ENCODE measurements at regions of chr6 and their contacts with region 1.

Region 1: GRCh38 chr6:24666641-24667377 is at the starts of genes ACOT13 and TDP2:
- DNase-seq: peak; percentile 94 to 98 (median 97)
- H3K4me3 ChIP-seq: peak within 1 kb of the TSS; percentile 78
- H3K4me3 Mint-ChIP-seq: peak within 1 kb of the TSS; percentile 97 to 100 (median 99)
- H3K27ac ChIP-seq: peak within 1 kb of the TSS; percentile 89
- H3K27ac Mint-ChIP-seq: peak within 1 kb of the TSS; percentile 90 to 99 (median 98)
- H3K4me1 ChIP-seq: peaks cover 39% of the 10 kb centered on the region
- H3K4me1 Mint-ChIP-seq: peaks cover 43 to 76% (median 64%) of the 10 kb centered on the region in 3 donors
- H3K27me3 ChIP-seq: no peaks in the 10 kb centered on the region
- H3K27me3 Mint-ChIP-seq: no peaks in the 10 kb centered on the region
- total RNA-seq, gene ACOT13: 19.6 to 25.3 TPM
- total RNA-seq, gene TDP2: 49.8 to 50.6 TPM

Region 2: DNA sequence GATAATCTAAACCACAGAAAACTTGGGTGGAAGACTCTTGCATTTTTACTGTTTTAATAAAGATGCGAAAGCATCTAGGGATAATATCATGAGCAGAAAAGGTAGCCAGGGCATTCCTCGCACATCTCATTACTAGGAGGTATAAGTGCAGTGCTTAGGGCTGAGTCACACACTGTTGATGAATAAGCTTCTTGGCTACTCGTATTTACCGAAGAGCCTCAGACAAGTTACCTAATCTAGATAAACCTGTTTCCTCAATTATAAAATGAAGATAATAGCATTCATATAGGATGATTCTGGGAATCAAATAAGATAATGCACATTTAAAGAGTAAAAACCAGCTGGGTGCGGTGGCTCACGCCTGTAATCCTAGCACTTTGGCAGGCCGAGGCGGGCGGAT is 20.0 kb before region 1 on chr6:
- CTCF ChIA-PET with region 1: interaction called, 15 read pairs
- POLR2A ChIA-PET with region 1: interaction called, 6 read pairs
- DNase-seq: no peak
- H3K4me3 ChIP-seq: no peak overlapping the region
- H3K4me3 Mint-ChIP-seq: peak overlapping the region; percentile 75 to 93 (median 88)
- H3K27ac ChIP-seq: no peak overlapping the region
- H3K27ac Mint-ChIP-seq: peak overlapping the region in 6 of 8 donors; percentile 64 to 96 (median 91)
- H3K4me1 ChIP-seq: peaks cover 6% of the 10 kb centered on the region
- H3K4me1 Mint-ChIP-seq: peaks cover 12 to 18% (median 15%) of the 10 kb centered on the region in 3 donors
- H3K27me3 ChIP-seq: peaks cover 6% of the 10 kb centered on the region
- H3K27me3 Mint-ChIP-seq: peaks cover 16 to 24% of the 10 kb centered on the region in 2 donors

Region 3: GRCh38 chr6:24720131-24720603 is 53.4 kb after region 1 on chr6:
- CTCF ChIA-PET with region 1: no interaction called
- POLR2A ChIA-PET with region 1: interaction called, 22 read pairs
- DNase-seq: peak; percentile 62 to 85 (median 82)
- H3K4me3 ChIP-seq: peak overlapping the region; percentile 89
- H3K4me3 Mint-ChIP-seq: peak overlapping the region; percentile 89 to 100 (median 96)
- H3K27ac ChIP-seq: peak overlapping the region; percentile 100
- H3K27ac Mint-ChIP-seq: peak overlapping the region; percentile 94 to 100 (median 98)
- H3K4me1 ChIP-seq: peaks cover 44% of the 10 kb centered on the region
- H3K4me1 Mint-ChIP-seq: peaks cover 48 to 58% (median 56%) of the 10 kb centered on the region in 3 donors
- H3K27me3 ChIP-seq: no peaks in the 10 kb centered on the region
- H3K27me3 Mint-ChIP-seq: peaks cover 0 to 5% of the 10 kb centered on the region in 2 donors